Mammary epithelial cell (primary cell): ENCODE measurements at regions of chr16 and their contacts with region 1.

Region 1: GRCh38 chr16:18959031-18959505 is 24.7 kb upstream of the TMC7 start:
- DNase-seq: no peak
- H3K4me3 ChIP-seq: no peak overlapping the region
- H3K27ac ChIP-seq: peak overlapping the region; percentile 34
- H3K4me1 ChIP-seq: peaks cover 38% of the 10 kb centered on the region
- H3K27me3 ChIP-seq: no peaks in the 10 kb centered on the region
- CTCF ChIP-seq: no peak

Region 2: GRCh38 chr16:18789850-18790724 is 169.0 kb before region 1 on chr16 and contains the start of gene RPS15A:
- CTCF ChIA-PET with region 1: no interaction called
- dilution Hi-C with region 1: loop called (anchors 10 kb)
- in situ Hi-C with region 1: no loop called
- intact Hi-C with region 1: no loop called
- DNase-seq: peak; percentile 96
- H3K4me3 ChIP-seq: peak within 1 kb of the TSS; percentile 80 to 98 (median 92)
- H3K27ac ChIP-seq: peak within 1 kb of the TSS; percentile 85
- H3K4me1 ChIP-seq: peaks cover 40% of the 10 kb centered on the region
- H3K27me3 ChIP-seq: no peaks in the 10 kb centered on the region
- CTCF ChIP-seq: no peak
- total RNA-seq, gene RPS15A: 682 to 1,206 TPM

Region 3: DNA sequence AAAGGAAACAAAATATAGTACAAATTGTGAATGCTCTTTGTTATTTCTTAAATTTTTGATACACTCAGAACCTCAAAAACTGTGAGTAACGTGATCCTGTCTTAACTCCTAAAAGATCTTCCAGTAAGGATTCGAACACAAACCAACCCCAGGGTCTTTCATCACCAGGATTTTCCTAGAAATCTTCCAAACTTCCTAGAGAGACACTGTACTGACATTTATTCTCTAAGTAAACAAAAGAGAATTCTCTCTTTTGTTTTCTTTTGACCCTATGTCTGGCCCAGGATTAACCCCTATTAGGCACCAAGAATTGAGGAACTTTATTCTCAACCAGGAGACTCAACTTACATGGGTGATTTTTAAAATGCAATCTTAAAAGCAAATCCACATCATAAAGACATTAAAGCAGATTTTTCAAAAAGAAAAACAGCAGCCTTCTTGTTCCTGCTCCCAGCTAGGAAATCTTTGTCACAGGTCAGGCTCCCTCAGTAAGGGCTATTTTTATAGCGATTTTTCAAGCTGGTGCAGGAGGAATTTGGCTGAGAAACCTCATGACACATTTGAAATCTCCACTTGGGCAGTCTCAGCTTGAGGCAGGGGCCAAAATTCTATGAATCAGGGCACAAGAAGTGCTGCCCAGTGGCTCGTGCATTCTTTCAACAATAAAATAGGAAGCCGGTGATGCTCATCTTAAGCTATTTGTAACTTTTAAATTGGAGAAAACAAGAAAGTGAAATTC is 26.7 kb before region 1 on chr16:
- CTCF ChIA-PET with region 1: no interaction called
- dilution Hi-C with region 1: no loop called
- in situ Hi-C with region 1: no loop called
- intact Hi-C with region 1: loop called (anchors 2 kb)
- DNase-seq: peak; percentile 35
- H3K4me3 ChIP-seq: no peak overlapping the region
- H3K27ac ChIP-seq: no peak overlapping the region
- H3K4me1 ChIP-seq: peaks cover 3% of the 10 kb centered on the region
- H3K27me3 ChIP-seq: no peaks in the 10 kb centered on the region
- CTCF ChIP-seq: no peak

Region 4: DNA sequence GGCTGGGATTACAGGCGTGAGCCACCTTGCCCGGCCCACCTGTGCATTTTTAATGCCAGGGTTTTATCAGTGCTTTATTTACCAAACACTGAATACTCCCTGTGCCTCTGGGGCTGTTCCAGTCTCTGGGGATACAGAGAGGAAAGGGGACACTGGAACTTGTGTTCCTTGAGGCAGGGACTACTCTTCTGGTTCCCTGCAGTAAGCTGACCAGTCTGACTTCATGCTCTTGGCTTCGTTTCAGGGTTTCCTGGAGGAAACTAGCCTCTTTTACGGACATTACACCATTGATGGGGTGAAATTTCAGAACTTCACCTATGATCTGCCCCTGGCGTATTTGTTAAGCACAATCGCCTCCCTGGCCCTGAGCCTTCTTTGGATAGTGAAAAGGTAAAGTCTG is 70.9 kb after region 1 on chr16:
- CTCF ChIA-PET with region 1: no interaction called
- dilution Hi-C with region 1: loop called (anchors 10 kb)
- in situ Hi-C with region 1: no loop called
- intact Hi-C with region 1: no loop called
- DNase-seq: no peak
- H3K4me3 ChIP-seq: no peak overlapping the region
- H3K27ac ChIP-seq: no peak overlapping the region
- H3K4me1 ChIP-seq: no peaks in the 10 kb centered on the region
- H3K27me3 ChIP-seq: no peaks in the 10 kb centered on the region
- CTCF ChIP-seq: no peak